Activated CD4-positive, alpha-beta T cell treated with anti-CD3 and anti-CD28 coated beads, Interleukin-2, amount 10 ng/mL, durations not matched to agents 7 days and 5 days (primary cell): ENCODE measurements at regions of chr12 and their contacts with region 1.

Region 1: GRCh38 chr12:6792522-6793201 is 3.3 kb downstream of the CD4 start:
- DNase-seq: peak; percentile 78
- H3K4me3 Mint-ChIP-seq: peak overlapping the region; percentile 95
- H3K27ac Mint-ChIP-seq: peak overlapping the region; percentile 95
- H3K4me1 Mint-ChIP-seq: peaks cover 58% of the 10 kb centered on the region
- H3K27me3 Mint-ChIP-seq: no peaks in the 10 kb centered on the region

Region 2: GRCh38 chr12:6613776-6614512 is 178.7 kb before region 1 on chr12:
- CTCF ChIA-PET with region 1: no interaction called
- POLR2A ChIA-PET with region 1: no interaction called
- DNase-seq: peak; percentile 52
- H3K4me3 Mint-ChIP-seq: no peak overlapping the region
- H3K27ac Mint-ChIP-seq: peak overlapping the region; percentile 60
- H3K4me1 Mint-ChIP-seq: peaks cover 51% of the 10 kb centered on the region
- H3K27me3 Mint-ChIP-seq: no peaks in the 10 kb centered on the region

Region 3: DNA sequence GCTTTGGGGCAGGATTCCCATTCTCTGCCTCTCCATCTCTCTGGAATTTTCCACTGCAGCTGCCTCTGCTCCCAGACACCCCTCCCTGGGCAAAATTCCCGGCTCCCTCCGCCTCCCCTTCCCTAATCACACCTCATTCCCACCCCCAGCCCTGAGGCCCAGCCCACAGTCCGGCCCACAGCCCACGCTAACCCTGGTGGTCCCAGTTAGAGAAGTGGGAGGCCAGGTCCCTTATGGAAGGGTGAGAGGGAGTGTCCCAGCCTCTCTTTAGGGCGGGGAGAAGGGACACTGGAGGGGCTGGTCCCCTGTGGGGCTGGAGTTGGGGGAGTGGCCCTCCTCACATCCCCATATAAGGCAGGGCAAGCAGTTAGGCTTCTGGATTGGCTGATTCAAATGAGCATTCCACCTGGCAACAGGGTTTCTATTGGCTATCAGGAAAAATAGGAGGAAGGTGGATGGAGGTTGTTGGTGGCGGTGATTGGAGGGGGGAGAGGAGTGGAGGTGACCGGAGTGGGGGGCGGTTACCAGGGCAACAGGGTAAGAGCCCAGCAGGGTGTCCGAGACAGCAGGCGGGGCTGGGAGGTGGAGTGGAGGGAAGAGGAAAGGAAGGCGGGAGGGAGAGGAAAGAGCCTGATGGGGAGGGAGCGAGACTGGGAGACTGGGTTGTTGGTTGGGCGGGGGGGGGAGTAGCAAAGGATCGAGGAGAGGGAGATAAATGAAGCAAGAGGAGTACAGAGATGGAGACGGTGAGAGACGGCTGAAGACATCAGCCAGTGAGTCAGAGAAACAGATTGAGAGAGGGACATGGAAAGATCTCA is 28.4 kb before region 1 on chr12:
- CTCF ChIA-PET with region 1: interaction called, 120 read pairs
- POLR2A ChIA-PET with region 1: no interaction called
- DNase-seq: peak; percentile 62
- H3K4me3 Mint-ChIP-seq: peak overlapping the region; percentile 12
- H3K27ac Mint-ChIP-seq: no peak overlapping the region
- H3K4me1 Mint-ChIP-seq: peaks cover 40% of the 10 kb centered on the region
- H3K27me3 Mint-ChIP-seq: peaks cover 50% of the 10 kb centered on the region

Region 4: DNA sequence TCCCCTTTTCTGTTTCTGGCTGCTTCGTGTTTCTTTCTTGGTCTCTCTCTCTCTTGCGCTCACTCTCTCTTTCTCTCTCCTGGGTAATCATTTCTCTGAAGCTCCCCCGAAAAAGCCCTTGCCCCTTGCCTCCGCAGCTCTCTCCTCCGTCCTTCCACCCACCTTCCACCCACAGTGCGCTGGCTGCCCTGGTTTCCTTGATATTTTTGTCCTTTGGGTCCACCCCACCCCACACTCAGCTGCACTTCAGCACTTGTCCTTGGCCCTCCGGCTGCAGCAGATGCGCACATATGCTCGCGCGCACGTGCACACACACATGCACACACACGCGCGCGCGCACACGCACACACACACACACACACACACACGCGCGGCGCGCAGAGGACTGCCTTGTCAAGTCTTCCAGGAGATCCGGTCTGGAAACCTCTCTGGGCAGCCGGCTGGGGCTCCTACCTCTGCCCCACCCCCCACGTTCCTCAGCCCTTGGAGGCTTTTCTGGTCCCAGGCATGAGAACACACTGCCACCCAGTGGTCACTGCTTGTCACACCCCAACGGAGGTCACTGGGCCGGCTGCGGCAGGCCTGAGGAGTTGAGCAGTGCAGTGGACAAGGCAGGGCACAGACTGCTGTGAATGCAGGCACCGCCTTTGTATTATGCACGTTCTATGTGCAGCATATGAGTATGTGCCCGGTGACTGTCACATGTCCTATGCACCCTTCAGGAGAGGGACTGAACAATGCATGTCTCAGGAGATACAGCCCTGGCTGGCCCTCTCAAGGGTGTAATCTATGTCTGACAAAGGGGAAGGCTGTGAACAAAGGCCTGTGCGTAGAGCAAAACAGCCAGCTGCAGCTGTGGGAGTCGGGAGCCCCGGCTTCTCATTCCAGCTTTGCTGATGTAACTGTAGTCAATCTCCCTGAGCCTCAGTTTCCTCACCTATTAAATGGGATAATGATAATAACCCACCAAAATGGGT is 13.8 kb before region 1 on chr12:
- CTCF ChIA-PET with region 1: interaction called, 23 read pairs
- POLR2A ChIA-PET with region 1: interaction called, 4 read pairs
- DNase-seq: peak; percentile 93
- H3K4me3 Mint-ChIP-seq: peak overlapping the region; percentile 70
- H3K27ac Mint-ChIP-seq: peak overlapping the region; percentile 84
- H3K4me1 Mint-ChIP-seq: peaks cover 69% of the 10 kb centered on the region
- H3K27me3 Mint-ChIP-seq: peaks cover 5% of the 10 kb centered on the region

Region 5: DNA sequence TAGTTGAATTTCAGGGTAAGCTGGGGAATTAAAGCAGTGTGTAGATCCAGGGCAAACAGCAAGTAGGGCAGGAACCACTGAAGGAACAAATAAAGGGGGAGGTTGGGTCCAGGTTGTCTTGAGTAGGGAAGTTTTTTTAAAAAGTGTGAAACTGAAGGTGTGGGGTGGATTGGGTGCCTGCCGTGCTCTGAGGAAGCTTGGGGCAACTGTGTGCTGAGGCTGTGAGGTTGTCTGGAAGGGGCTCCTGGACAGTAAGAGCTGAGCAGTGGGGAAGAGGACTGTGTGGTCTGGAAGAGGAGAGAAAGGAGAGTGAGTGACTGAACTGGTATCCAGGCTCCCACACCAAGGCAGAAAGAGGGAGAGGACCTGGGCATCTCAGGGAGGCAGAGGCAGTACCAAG is 18.1 kb after region 1 on chr12:
- CTCF ChIA-PET with region 1: interaction called, 19 read pairs
- POLR2A ChIA-PET with region 1: no interaction called
- DNase-seq: no peak
- H3K4me3 Mint-ChIP-seq: no peak overlapping the region
- H3K27ac Mint-ChIP-seq: peak overlapping the region; percentile 43
- H3K4me1 Mint-ChIP-seq: peaks cover 20% of the 10 kb centered on the region
- H3K27me3 Mint-ChIP-seq: no peaks in the 10 kb centered on the region

Region 6: GRCh38 chr12:6825398-6826124 is 32.9 kb after region 1 on chr12:
- CTCF ChIA-PET with region 1: interaction called, 13 read pairs
- POLR2A ChIA-PET with region 1: no interaction called
- DNase-seq: peak; percentile 83
- H3K4me3 Mint-ChIP-seq: no peak overlapping the region
- H3K27ac Mint-ChIP-seq: peak overlapping the region; percentile 1
- H3K4me1 Mint-ChIP-seq: peaks cover 29% of the 10 kb centered on the region
- H3K27me3 Mint-ChIP-seq: peaks cover 61% of the 10 kb centered on the region

Region 7: GRCh38 chr12:6843118-6843902 is 50.6 kb after region 1 on chr12:
- CTCF ChIA-PET with region 1: no interaction called
- POLR2A ChIA-PET with region 1: no interaction called
- DNase-seq: no peak
- H3K4me3 Mint-ChIP-seq: no peak overlapping the region
- H3K27ac Mint-ChIP-seq: no peak overlapping the region
- H3K4me1 Mint-ChIP-seq: peaks cover 7% of the 10 kb centered on the region
- H3K27me3 Mint-ChIP-seq: no peaks in the 10 kb centered on the region